GM12878 (cell line): ENCODE measurements at regions of chr4 and their contacts with region 1.

Region 1: DNA sequence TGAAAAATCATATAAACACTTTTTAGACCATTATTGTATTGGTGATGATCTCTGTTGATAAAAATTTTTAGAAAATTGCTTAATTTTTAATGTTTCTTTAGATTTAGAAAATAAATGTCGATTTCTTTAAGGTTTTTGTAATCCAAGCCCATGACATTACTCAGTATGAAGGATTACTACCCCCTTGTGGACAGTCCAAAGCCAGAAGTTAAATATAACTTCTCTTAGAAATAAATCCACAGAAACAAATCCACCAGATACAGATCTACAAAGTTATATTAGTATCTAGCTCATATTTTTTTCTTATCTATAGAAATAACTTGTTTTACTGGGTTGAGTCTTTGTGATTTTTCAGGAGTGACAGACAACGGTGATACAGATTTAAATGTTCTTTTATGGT is 18.9 kb downstream of the TIFA start:
- DNase-seq: no peak
- ATAC-seq: peak; percentile 53
- H3K4me3 ChIP-seq: no peak overlapping the region
- H3K27ac ChIP-seq: no peak overlapping the region
- H3K4me1 ChIP-seq: no peaks in the 10 kb centered on the region
- H3K27me3 ChIP-seq: no peaks in the 10 kb centered on the region
- CTCF ChIP-seq: peak; percentile 26 to 43 (median 32); a peak in 3 of 6 replicates
- EP300 ChIP-seq: no peak
- POLR2A ChIP-seq: no peak
- RAD21 ChIP-seq: peak; percentile 54

Region 2: DNA sequence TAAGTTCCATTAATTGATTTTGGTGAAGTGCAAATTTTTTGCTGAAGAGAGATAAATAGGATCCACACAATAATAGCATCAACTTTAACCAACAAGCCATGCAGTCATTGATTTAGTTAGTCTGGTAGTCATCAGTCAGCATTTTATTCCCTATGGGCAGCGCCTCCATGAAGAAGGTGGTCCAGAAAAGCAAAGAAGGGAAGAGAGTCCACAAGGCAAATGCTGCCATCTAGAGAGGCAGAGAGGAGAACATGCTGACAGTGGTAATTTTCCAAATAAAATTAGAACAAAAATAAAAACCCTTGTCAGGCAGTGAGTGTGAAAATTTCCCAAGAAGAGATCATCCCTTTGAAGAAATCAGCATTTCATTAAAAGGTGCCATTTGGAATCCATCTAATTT is 488.3 kb before region 1 on chr4:
- CTCF ChIA-PET with region 1: no interaction called
- POLR2A ChIA-PET with region 1: no interaction called
- RAD21 ChIA-PET with region 1: no interaction called
- SMC1A ChIA-PET with region 1: no interaction called
- in situ Hi-C with region 1: no loop called
- intact Hi-C with region 1: no loop called
- DNase-seq: no peak
- ATAC-seq: no peak
- H3K4me3 ChIP-seq: no peak overlapping the region
- H3K27ac ChIP-seq: no peak overlapping the region
- H3K4me1 ChIP-seq: no peaks in the 10 kb centered on the region
- H3K27me3 ChIP-seq: no peaks in the 10 kb centered on the region
- CTCF ChIP-seq: no peak; a peak in 1 of 6 replicates
- EP300 ChIP-seq: no peak
- POLR2A ChIP-seq: no peak
- RAD21 ChIP-seq: no peak

Region 3: DNA sequence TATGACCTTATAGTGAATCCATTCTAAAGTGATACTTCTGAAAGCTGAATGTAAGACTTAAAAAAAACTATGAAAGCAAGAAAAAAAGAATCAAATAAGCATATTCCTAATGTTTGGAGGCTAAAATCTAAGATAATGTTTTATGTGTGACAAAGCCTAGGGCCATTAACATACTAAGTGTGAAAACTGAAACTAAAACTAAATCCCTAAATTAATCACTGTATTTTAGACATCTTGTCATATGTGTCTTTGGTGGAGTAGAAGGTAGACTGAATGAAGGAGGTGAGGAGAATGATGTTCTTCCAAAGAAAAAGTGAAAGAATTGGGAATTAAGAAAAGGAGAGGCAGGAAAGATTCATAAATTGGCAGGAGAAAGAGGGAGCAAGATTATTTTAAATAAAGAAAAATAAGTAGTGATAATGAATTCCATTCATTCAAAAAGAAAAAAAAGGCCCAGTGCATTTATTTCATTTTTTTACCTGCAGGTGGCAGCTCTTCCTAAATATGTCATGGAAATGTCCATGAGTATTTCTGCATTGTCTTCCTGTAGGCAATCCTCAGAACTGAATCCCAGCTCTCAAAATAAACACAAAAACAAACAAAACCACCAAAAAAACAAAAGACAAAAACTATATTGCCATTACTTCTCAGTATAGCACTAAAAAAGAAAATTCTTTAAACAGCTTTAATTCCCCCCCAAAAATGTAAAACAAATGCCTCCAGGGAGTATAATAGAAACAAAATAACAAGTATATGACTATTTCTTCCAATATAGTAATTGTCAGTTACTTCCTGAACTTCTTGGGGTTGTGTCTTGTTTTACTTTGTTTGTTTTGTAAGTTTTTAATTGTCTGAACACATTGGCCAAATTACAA is 52.2 kb before region 1 on chr4:
- CTCF ChIA-PET with region 1: interaction called, 15 read pairs
- POLR2A ChIA-PET with region 1: no interaction called
- RAD21 ChIA-PET with region 1: interaction called, 4 read pairs
- SMC1A ChIA-PET with region 1: interaction called, 4 read pairs
- in situ Hi-C with region 1: no loop called
- intact Hi-C with region 1: no loop called
- DNase-seq: no peak
- ATAC-seq: peak; percentile 63; the same call in 2 of the 3 replicates
- H3K4me3 ChIP-seq: no peak overlapping the region
- H3K27ac ChIP-seq: no peak overlapping the region
- H3K4me1 ChIP-seq: no peaks in the 10 kb centered on the region
- H3K27me3 ChIP-seq: no peaks in the 10 kb centered on the region
- CTCF ChIP-seq: peak in 2 of 3 experiments; percentile 20 to 49; a peak in 4 of 6 replicates
- EP300 ChIP-seq: no peak
- POLR2A ChIP-seq: no peak
- RAD21 ChIP-seq: peak; percentile 46; the same call in 1 of the 2 replicates

Region 4: GRCh38 chr4:112296949-112297880 is 30.4 kb after region 1 on chr4 and contains the start of gene ALPK1:
- CTCF ChIA-PET with region 1: interaction called, 3 read pairs
- POLR2A ChIA-PET with region 1: interaction called, 3 read pairs
- RAD21 ChIA-PET with region 1: interaction called, 4 read pairs
- SMC1A ChIA-PET with region 1: interaction called, 10 read pairs
- in situ Hi-C with region 1: no loop called
- intact Hi-C with region 1: no loop called
- DNase-seq: no peak
- ATAC-seq: peak; percentile 89
- H3K4me3 ChIP-seq: peak within 1 kb of the TSS; percentile 67
- H3K27ac ChIP-seq: peak within 1 kb of the TSS; percentile 62
- H3K4me1 ChIP-seq: peaks cover 7% of the 10 kb centered on the region
- H3K27me3 ChIP-seq: no peaks in the 10 kb centered on the region
- CTCF ChIP-seq: no peak
- EP300 ChIP-seq: no peak
- POLR2A ChIP-seq: no peak
- RAD21 ChIP-seq: no peak
- polyA plus RNA-seq, gene ALPK1: 8.5 to 9.7 TPM